Activated CD8-positive, alpha-beta T cell treated with anti-CD3 and anti-CD28 coated beads for 36 hours (primary cell): ENCODE measurements at regions of chr1 and their contacts with region 1.

Region 1: DNA sequence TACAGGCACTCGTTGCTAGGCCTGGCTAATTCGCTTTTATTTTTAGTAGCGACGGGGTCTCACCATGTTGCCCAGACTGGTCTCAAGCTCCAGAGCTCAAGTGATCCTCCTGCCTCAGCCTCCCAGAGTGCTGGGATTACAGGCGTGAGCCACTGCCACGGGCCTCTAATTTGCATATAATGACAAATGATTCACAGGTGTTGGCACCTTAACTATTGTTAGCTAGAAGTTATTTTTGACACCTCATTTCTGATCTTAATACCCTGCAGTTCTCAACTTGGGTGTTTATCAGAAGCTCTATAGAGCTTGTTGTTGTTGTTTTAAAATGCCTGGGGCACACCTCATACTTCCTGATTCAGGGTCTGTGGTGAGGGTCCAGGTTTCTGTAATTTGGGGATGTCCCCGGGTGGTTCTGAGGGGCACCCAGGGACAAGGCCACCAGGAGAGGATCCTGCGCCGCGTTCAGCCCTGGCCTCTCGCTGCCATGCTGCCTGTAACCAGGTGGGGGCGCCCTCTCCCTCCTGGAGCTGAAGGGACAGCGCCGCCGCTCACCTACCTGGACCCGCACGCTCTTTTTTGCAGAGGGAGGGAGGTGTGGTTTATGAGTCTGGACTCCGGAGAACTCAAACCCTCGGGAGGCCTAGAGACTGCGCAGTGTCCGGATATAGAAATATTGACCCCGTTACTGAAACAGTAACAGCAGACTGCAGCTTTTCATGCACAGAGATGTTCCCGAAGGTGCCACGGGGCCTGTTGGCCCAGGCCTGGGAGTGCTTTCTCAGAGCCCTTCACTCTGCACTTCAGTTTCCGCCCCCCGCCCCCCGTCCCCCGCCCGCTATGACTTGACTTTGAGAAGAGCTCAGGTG is 23.0 kb upstream of the NEK2 start:
- DNase-seq: peak; percentile 92
- ATAC-seq: peak; percentile 95
- H3K4me3 Mint-ChIP-seq: peak overlapping the region; percentile 33
- H3K27ac Mint-ChIP-seq: no peak overlapping the region
- H3K4me1 Mint-ChIP-seq: peaks cover 24% of the 10 kb centered on the region
- H3K27me3 Mint-ChIP-seq: peaks cover 1% of the 10 kb centered on the region
- CTCF ChIP-seq: peak; percentile 95

Region 2: DNA sequence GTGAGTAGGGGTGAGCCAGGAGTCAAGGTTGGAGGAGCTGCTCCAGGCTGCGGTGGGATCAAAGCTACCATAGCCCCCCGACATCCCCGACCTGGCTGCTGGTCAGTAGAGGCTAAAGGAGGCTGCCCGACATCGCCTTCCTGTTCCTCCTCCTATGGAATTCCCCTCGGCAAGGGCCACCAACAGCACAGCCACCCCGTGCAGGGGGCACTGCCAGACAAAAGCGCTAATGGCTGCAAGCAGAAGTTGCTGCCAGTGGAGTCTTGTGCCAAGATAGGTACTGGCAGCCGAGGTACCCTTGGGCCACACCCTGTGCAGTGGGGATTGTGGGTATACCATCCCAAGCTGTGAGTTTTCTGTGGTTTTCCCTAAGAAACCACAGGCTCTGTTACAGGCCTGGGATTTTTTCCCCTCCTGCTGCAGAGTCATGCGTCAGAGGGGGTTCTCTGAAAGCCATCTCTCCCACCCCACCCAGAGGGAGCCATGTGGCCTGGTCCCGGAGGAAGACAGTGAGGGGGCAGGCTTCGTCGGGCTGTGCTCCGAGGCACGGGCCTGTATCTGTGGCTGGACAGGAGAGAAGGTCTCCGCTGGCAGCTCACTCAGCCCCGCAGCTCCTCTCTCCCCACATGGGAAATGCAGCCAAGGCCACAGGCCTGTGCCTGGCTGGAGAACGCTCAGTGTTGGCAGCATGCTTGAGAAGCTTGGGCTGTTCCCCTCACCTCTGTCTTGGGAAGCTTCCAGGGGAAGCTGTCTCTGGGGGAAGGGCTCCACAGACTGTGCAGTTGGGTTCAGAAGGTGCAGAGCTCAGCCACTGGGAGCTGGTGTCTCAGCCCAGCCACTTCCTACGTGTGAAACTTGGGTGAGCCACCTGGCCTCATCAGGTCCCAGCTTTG is 65.5 kb before region 1 on chr1:
- CTCF ChIA-PET with region 1: no interaction called
- POLR2A ChIA-PET with region 1: no interaction called
- intact Hi-C with region 1: no loop called
- DNase-seq: no peak
- ATAC-seq: no peak
- H3K4me3 Mint-ChIP-seq: no peak overlapping the region
- H3K27ac Mint-ChIP-seq: no peak overlapping the region
- H3K4me1 Mint-ChIP-seq: no peaks in the 10 kb centered on the region
- H3K27me3 Mint-ChIP-seq: no peaks in the 10 kb centered on the region
- CTCF ChIP-seq: no peak

Region 3: GRCh38 chr1:211667065-211667617 is 31.3 kb before region 1 on chr1:
- CTCF ChIA-PET with region 1: no interaction called
- POLR2A ChIA-PET with region 1: no interaction called
- intact Hi-C with region 1: no loop called
- DNase-seq: no peak
- ATAC-seq: no peak
- H3K4me3 Mint-ChIP-seq: no peak overlapping the region
- H3K27ac Mint-ChIP-seq: no peak overlapping the region
- H3K4me1 Mint-ChIP-seq: no peaks in the 10 kb centered on the region
- H3K27me3 Mint-ChIP-seq: no peaks in the 10 kb centered on the region
- CTCF ChIP-seq: no peak

Region 4: DNA sequence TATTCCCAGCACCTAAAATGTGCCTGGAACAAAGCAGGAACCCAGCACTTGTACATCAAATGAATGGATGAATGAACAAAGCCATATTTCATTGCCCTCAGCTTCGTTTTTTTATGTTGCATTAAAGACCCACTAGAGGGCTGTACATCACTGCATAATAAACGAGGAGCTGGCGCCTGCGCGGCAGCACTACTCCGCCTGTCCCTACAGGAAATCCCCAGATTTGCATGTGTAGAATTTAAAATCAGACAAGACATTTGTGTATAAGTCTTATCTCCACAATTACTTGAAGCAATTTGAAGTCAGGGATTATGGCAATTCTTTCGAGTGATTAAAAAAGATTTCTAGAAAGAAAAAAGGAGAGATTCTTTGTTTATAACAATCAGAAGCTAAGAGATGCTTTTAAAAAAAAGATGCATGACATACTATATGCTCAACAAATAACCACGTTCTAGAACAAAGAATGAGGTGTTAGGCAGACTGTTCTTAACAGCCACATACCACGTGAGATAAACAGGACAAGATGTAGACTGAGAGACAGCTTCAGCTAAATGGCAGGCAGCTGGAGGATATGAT is 17.6 kb before region 1 on chr1:
- CTCF ChIA-PET with region 1: interaction called, 185 read pairs
- POLR2A ChIA-PET with region 1: interaction called, 3 read pairs
- intact Hi-C with region 1: no loop called
- DNase-seq: peak; percentile 79
- ATAC-seq: peak; percentile 93
- H3K4me3 Mint-ChIP-seq: no peak overlapping the region
- H3K27ac Mint-ChIP-seq: peak overlapping the region; percentile 83
- H3K4me1 Mint-ChIP-seq: peaks cover 8% of the 10 kb centered on the region
- H3K27me3 Mint-ChIP-seq: no peaks in the 10 kb centered on the region
- CTCF ChIP-seq: peak; percentile 69

Region 5: GRCh38 chr1:211724687-211725196 is 26.3 kb after region 1 on chr1:
- CTCF ChIA-PET with region 1: interaction called, 21 read pairs
- POLR2A ChIA-PET with region 1: no interaction called
- intact Hi-C with region 1: no loop called
- DNase-seq: no peak
- ATAC-seq: no peak
- H3K4me3 Mint-ChIP-seq: no peak overlapping the region
- H3K27ac Mint-ChIP-seq: no peak overlapping the region
- H3K4me1 Mint-ChIP-seq: no peaks in the 10 kb centered on the region
- H3K27me3 Mint-ChIP-seq: no peaks in the 10 kb centered on the region
- CTCF ChIP-seq: no peak

Region 6: GRCh38 chr1:211741116-211741515 is 42.7 kb after region 1 on chr1:
- CTCF ChIA-PET with region 1: interaction called, 31 read pairs
- POLR2A ChIA-PET with region 1: interaction called, 3 read pairs
- intact Hi-C with region 1: loop called (anchors 2 kb)
- DNase-seq: no peak
- ATAC-seq: no peak
- H3K4me3 Mint-ChIP-seq: no peak overlapping the region
- H3K27ac Mint-ChIP-seq: no peak overlapping the region
- H3K4me1 Mint-ChIP-seq: peaks cover 41% of the 10 kb centered on the region
- H3K27me3 Mint-ChIP-seq: no peaks in the 10 kb centered on the region
- CTCF ChIP-seq: no peak

Region 7: DNA sequence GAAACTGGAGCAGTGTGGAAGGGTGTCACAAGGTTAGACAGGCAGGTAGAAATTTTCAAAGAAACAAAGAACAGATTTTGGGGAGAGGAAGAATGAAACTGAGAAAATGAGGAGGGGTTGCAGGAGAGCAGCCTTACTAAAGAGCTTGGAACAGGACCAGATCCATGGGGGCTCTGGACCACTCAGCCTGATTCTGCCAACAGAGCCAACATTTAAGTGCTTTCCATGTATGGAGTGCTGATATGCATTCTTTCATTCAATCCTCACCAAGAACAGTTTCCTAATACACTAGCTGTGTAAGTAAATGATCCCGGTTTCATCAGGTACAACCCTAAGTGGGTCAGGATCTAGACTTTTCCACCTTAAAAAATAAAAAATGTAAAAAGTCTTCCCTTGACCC is 115.9 kb after region 1 on chr1:
- CTCF ChIA-PET with region 1: interaction called, 13 read pairs
- POLR2A ChIA-PET with region 1: no interaction called
- intact Hi-C with region 1: no loop called
- DNase-seq: no peak
- ATAC-seq: no peak
- H3K4me3 Mint-ChIP-seq: no peak overlapping the region
- H3K27ac Mint-ChIP-seq: no peak overlapping the region
- H3K4me1 Mint-ChIP-seq: no peaks in the 10 kb centered on the region
- H3K27me3 Mint-ChIP-seq: no peaks in the 10 kb centered on the region
- CTCF ChIP-seq: no peak

Region 8: GRCh38 chr1:211886551-211886950 is 188.2 kb after region 1 on chr1:
- CTCF ChIA-PET with region 1: interaction called, 11 read pairs
- POLR2A ChIA-PET with region 1: no interaction called
- intact Hi-C with region 1: no loop called
- DNase-seq: no peak
- ATAC-seq: no peak
- H3K4me3 Mint-ChIP-seq: no peak overlapping the region
- H3K27ac Mint-ChIP-seq: no peak overlapping the region
- H3K4me1 Mint-ChIP-seq: peaks cover 17% of the 10 kb centered on the region
- H3K27me3 Mint-ChIP-seq: peaks cover 3% of the 10 kb centered on the region
- CTCF ChIP-seq: no peak